IMR-90 (cell line): ENCODE measurements at regions of chr6 and their contacts with region 1.

Region 1: DNA sequence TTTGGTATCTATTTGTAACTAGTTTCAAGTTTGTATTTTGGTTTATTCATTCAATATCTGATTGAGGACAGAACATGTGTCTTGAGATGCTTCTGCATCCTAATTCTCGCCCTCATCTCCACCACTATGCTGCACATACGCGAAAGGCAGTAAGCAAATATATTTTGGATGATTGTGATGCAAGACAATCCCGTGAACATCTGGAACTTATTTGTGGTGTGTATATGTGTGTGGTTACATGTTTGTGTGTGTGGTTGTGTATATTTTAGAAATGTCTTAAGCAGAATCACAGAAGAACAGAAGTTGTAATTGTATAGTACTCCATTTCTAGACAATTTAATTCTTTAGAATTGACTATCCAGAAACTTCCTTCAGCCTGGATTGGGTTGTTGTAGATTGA is 35.1 kb upstream of the RNF144B start:
- DNase-seq: peak; percentile 35
- ATAC-seq: no peak
- H3K4me3 ChIP-seq: no peak overlapping the region
- H3K27ac ChIP-seq: no peak overlapping the region
- H3K4me1 ChIP-seq: peaks cover 2% of the 10 kb centered on the region; the same call in 1 of the 2 replicates
- H3K27me3 ChIP-seq: no peaks in the 10 kb centered on the region
- CTCF ChIP-seq: no peak
- POLR2A ChIP-seq: no peak
- RAD21 ChIP-seq: no peak

Region 2: GRCh38 chr6:17200395-17200794 is 1151.6 kb before region 1 on chr6:
- CTCF ChIA-PET with region 1: no interaction called
- POLR2A ChIA-PET with region 1: no interaction called
- dilution Hi-C with region 1: no loop called
- in situ Hi-C with region 1: no loop called
- intact Hi-C with region 1: no loop called
- DNase-seq: no peak
- ATAC-seq: no peak
- H3K4me3 ChIP-seq: no peak overlapping the region
- H3K27ac ChIP-seq: no peak overlapping the region
- H3K4me1 ChIP-seq: peaks cover 1% of the 10 kb centered on the region; the same call in 1 of the 2 replicates
- H3K27me3 ChIP-seq: no peaks in the 10 kb centered on the region
- CTCF ChIP-seq: no peak
- POLR2A ChIP-seq: no peak
- RAD21 ChIP-seq: no peak

Region 3: DNA sequence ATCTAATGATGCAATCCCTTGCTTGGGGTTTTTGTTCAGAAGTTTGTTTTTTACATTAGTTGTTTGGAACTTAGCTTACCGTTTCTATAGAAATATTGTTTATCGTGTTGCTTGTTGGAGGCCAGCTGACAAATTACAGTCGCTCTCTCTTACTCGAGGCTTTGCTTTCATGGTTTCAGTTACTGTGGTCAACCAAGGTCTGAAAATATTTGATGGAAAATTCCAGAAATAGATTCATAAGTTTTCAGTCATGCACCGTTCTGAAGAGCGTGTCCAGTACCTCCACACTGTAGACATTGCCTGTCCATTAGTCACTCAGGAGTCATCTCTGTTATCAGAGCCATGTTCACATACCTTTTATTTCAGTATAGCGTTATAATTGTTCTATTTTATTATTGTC is 135.6 kb before region 1 on chr6:
- CTCF ChIA-PET with region 1: no interaction called
- POLR2A ChIA-PET with region 1: no interaction called
- dilution Hi-C with region 1: no loop called
- in situ Hi-C with region 1: no loop called
- intact Hi-C with region 1: no loop called
- DNase-seq: peak; percentile 80
- ATAC-seq: peak; percentile 71
- H3K4me3 ChIP-seq: no peak overlapping the region
- H3K27ac ChIP-seq: no peak overlapping the region
- H3K4me1 ChIP-seq: peaks cover 2% of the 10 kb centered on the region; the same call in 1 of the 2 replicates
- H3K27me3 ChIP-seq: no peaks in the 10 kb centered on the region
- CTCF ChIP-seq: no peak
- POLR2A ChIP-seq: no peak
- RAD21 ChIP-seq: no peak

Region 4: GRCh38 chr6:18367371-18367770 is 15.4 kb after region 1 on chr6:
- CTCF ChIA-PET with region 1: interaction called, 10 read pairs
- POLR2A ChIA-PET with region 1: no interaction called
- dilution Hi-C with region 1: no loop called
- in situ Hi-C with region 1: no loop called
- intact Hi-C with region 1: no loop called
- DNase-seq: no peak
- ATAC-seq: no peak
- H3K4me3 ChIP-seq: no peak overlapping the region
- H3K27ac ChIP-seq: no peak overlapping the region
- H3K4me1 ChIP-seq: peaks cover 2% of the 10 kb centered on the region; the same call in 1 of the 2 replicates
- H3K27me3 ChIP-seq: no peaks in the 10 kb centered on the region
- CTCF ChIP-seq: no peak
- POLR2A ChIP-seq: no peak
- RAD21 ChIP-seq: no peak